AG04450 (cell line): ENCODE measurements at regions of chr2 and their contacts with region 1.

Region 1: DNA sequence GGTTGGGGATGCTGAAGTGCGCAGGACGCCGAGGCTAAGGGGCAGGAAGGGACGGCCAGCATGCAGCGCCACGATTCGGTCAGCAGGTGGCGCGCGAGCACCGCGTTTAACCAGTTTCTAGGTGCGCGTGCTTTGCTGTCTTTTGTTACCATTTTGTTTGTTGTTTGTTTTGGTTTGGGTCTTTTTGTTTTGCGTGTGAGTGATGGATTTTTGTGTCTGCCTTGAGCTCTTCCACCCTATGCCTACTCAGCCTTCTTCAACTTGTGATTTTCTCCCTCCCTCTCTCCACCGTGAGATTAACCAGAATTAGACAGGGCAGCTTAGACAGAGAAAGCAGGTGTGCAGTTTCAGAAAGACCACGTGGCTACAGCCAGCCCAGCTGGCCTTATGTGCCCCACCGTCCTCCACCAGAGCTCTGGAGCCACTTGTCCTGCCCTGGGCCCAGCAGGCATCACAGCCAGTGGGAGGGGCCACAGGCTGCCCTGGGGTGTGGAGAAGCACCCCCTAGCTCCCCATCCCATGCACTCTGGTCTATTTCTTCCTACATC is 180.2 kb downstream of the RNF144A start:
- DNase-seq: peak; percentile 11
- H3K4me3 ChIP-seq: no peak overlapping the region
- H3K27ac ChIP-seq: no peak overlapping the region
- H3K27me3 ChIP-seq: no peaks in the 10 kb centered on the region
- CTCF ChIP-seq: peak; percentile 96

Region 2: DNA sequence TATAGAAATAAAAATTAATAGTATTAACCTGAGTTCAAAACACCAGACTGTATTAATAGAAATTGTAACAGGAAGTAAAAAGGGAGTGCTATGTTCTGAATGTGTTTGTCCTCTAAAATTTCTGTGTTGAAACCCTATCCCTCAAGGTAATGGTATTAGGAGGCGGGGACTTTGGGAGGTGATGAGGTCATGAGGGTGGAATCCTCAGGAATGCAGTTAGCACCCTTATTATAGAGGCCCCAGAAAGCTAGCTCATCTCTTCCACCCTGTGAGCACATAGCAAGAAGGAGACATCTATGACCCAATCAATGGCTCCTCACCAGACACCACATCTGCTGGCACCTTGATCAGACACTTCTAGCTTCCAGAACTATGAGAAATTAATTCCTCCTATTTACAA is 356.2 kb before region 1 on chr2:
- CTCF ChIA-PET with region 1: no interaction called
- POLR2A ChIA-PET with region 1: no interaction called
- DNase-seq: no peak
- H3K4me3 ChIP-seq: no peak overlapping the region
- H3K27ac ChIP-seq: no peak overlapping the region
- H3K27me3 ChIP-seq: no peaks in the 10 kb centered on the region
- CTCF ChIP-seq: no peak

Region 3: DNA sequence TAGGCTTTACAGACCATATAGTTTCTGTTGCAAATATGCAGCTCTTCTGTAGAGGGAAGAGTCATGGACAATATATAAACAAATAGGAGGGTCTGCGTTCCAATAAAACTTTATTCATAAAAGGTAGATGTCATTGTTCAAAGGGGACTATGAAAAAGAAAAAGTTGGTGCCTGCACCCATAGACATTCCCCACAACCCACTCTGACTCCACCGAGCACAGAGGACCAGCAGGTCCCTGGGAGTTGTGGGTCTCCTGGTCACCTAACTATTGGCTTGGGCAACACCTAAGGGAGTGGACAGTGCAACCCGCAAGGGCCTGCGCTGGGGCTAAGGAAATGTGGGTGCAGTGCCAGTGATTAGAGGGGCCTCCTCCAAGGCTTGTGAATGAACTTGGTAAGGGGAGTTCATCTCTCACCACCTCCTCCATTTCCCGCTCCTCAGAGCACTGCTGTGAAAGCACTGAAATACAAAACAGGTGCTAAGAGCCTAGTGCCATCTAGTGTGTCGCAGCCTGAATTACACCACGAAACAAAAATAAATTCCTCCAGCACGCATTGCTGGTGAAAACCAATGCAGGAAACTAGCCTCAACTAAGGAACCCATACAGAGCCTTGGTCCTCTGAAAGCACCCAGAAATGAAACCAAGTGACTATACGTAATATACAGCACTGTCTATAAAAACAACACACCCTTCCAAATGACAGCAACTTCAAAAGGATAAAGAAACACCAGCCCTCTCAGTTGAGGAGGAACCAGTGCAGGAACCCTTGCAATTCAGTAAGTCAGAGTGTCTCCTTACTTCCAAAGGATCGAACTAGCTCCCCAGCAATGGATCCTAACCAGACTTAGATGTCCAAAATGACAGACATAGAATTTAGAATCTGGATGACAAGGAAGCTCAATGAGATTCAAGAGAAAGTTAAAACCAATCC is 13.6 kb before region 1 on chr2:
- CTCF ChIA-PET with region 1: interaction called, 18 read pairs
- POLR2A ChIA-PET with region 1: no interaction called
- DNase-seq: no peak
- H3K4me3 ChIP-seq: no peak overlapping the region
- H3K27ac ChIP-seq: no peak overlapping the region
- H3K27me3 ChIP-seq: no peaks in the 10 kb centered on the region
- CTCF ChIP-seq: peak; percentile 63

Region 4: DNA sequence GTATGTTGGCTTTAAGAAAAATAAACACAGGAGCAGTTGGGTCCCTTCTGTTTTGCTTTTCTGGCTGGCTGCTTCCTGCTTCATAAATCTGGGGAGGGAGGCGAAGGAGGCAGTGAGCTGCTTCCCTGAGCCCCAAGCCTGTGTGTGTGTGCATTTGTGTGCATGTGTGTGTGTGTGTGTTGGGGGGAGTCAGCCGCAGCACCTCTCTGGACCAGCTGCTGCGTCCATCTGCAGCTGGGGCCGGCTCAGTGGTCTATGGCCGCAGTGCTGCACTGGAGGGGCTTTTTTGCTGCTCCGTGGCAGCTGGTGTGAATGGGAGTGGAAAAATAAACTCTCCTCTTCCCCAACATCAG is 12.1 kb after region 1 on chr2:
- CTCF ChIA-PET with region 1: interaction called, 24 read pairs
- POLR2A ChIA-PET with region 1: no interaction called
- DNase-seq: no peak
- H3K4me3 ChIP-seq: no peak overlapping the region
- H3K27ac ChIP-seq: no peak overlapping the region
- H3K27me3 ChIP-seq: no peaks in the 10 kb centered on the region
- CTCF ChIP-seq: no peak